ENCODE measurements at regions of chr3 and their contacts with region 1.

Region 1: GRCh38 chr3:112293368-112294321 is at the start of gene SLC9C1:
- DNase-seq: peak; percentile 84
- H3K4me3 Mint-ChIP-seq: peak within 1 kb of the TSS; percentile 60
- H3K27ac Mint-ChIP-seq: peak within 1 kb of the TSS; percentile 88
- H3K4me1 Mint-ChIP-seq: peaks cover 16% of the 10 kb centered on the region
- H3K27me3 Mint-ChIP-seq: no peaks in the 10 kb centered on the region
- CTCF ChIP-seq: peak; percentile 56
- total RNA-seq, gene SLC9C1: not detected in 2 replicates

Region 2: DNA sequence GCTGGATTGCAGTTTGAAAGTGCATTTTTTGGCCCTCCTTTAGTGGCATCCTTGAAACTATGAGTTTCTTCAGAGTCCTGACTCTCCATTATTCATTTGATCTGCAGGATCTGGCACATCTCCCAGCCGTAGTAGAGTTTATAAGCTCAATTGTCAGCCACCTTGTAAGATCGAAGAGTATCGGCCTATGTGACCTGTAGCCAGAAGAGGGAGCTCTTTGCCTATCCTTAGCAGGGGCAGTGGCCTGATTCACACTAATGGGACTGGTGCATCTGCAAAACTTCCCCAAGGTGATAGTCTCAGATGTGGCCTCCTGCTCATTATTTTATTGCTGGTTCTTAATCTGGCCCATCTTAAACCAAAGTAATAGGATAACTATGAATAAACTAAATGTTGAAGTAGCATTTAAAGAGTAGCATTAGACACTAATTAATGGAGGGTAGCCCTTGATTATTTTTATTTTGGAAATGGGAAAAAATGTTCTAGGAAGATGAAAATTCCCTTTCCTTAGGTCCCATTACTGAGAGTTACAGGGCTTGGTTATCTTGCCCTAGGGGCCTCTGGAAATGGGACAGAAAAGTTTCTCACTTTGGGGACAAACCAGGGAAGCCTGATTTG is 181.8 kb before region 1 on chr3:
- CTCF ChIA-PET with region 1: interaction called, 20 read pairs
- POLR2A ChIA-PET with region 1: no interaction called
- intact Hi-C with region 1: loop called (anchors 1 kb)
- DNase-seq: peak; percentile 82
- H3K4me3 Mint-ChIP-seq: no peak overlapping the region
- H3K27ac Mint-ChIP-seq: no peak overlapping the region
- H3K4me1 Mint-ChIP-seq: peaks cover 16% of the 10 kb centered on the region
- H3K27me3 Mint-ChIP-seq: no peaks in the 10 kb centered on the region
- CTCF ChIP-seq: peak; percentile 80

Region 3: DNA sequence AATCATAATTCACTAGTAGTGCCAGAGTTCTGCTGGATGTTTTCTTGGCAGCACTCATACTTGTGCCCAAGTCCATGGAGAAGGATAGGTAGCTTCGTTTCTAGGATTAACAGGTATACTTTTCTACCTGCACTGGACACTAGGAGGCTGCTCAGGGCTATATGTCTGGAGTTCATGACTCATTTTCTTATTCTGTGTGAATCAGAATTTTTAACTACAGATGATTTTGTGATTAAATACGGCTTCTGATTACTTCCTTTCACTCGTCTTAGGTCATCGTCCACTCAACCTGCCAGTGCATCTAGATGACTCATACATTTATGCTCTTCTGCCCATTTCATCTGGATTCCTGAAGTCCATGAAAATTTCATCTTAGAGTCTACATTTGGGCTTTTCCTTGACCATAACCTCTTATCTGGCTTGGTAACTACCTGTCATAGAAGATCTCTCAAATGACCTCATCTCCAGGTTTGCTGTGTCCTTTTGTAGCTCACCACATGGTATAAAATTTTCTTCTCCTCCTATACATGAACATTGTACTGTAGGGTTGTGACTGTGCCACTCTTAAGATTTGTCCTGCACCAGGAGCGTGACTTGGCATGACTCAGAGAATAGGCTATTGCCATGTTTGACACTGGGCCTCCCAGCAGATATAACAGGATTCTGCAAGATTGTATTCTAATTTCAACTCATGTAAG is 93.9 kb before region 1 on chr3:
- CTCF ChIA-PET with region 1: interaction called, 25 read pairs
- POLR2A ChIA-PET with region 1: no interaction called
- intact Hi-C with region 1: no loop called
- DNase-seq: peak; percentile 83
- H3K4me3 Mint-ChIP-seq: no peak overlapping the region
- H3K27ac Mint-ChIP-seq: no peak overlapping the region
- H3K4me1 Mint-ChIP-seq: peaks cover 7% of the 10 kb centered on the region
- H3K27me3 Mint-ChIP-seq: no peaks in the 10 kb centered on the region
- CTCF ChIP-seq: no peak

Region 4: GRCh38 chr3:112303764-112304325 is 10.2 kb after region 1 on chr3:
- CTCF ChIA-PET with region 1: interaction called, 48 read pairs
- POLR2A ChIA-PET with region 1: interaction called, 23 read pairs
- intact Hi-C with region 1: no loop called
- DNase-seq: no peak
- H3K4me3 Mint-ChIP-seq: no peak overlapping the region
- H3K27ac Mint-ChIP-seq: no peak overlapping the region
- H3K4me1 Mint-ChIP-seq: peaks cover 7% of the 10 kb centered on the region
- H3K27me3 Mint-ChIP-seq: no peaks in the 10 kb centered on the region
- CTCF ChIP-seq: no peak

Region 5: GRCh38 chr3:112327371-112327951 is 33.8 kb after region 1 on chr3:
- CTCF ChIA-PET with region 1: interaction called, 97 read pairs
- POLR2A ChIA-PET with region 1: interaction called, 7 read pairs
- intact Hi-C with region 1: loop called (anchors 1 kb)
- DNase-seq: peak; percentile 73
- H3K4me3 Mint-ChIP-seq: no peak overlapping the region
- H3K27ac Mint-ChIP-seq: no peak overlapping the region
- H3K4me1 Mint-ChIP-seq: no peaks in the 10 kb centered on the region
- H3K27me3 Mint-ChIP-seq: no peaks in the 10 kb centered on the region
- CTCF ChIP-seq: peak; percentile 54

Region 6: DNA sequence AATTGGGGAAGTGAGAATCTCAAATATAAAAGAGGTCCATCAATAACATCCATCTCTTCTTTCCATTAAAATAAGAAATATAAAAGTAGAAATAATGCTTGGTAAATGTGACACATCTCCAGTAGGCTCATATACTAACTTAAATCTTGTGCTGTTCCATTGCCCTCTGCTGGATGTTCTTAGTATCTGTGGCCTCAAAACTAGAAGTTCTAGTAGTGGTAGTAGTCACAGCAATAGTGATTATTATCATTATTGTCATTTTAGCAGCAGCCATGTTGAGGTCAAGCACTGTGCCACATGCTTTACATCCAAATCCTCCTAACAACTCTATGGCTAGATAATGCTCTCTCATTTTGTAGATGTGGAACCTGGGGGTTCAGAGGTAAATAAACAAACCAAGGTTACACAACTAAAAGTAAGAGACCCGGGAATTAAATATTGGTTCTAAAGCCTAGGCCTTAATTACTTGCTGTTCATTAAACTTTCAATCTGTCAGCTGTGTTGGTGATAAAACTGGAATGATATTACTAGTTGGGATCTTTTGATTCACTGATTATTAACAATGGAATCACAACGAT is 225.9 kb after region 1 on chr3:
- CTCF ChIA-PET with region 1: interaction called, 98 read pairs
- POLR2A ChIA-PET with region 1: interaction called, 5 read pairs
- intact Hi-C with region 1: loop called (anchors 1 kb)
- DNase-seq: peak; percentile 66
- H3K4me3 Mint-ChIP-seq: no peak overlapping the region
- H3K27ac Mint-ChIP-seq: no peak overlapping the region
- H3K4me1 Mint-ChIP-seq: no peaks in the 10 kb centered on the region
- H3K27me3 Mint-ChIP-seq: no peaks in the 10 kb centered on the region
- CTCF ChIP-seq: peak; percentile 69